ENCODE measurements at regions of chr11 and their contacts with region 1.

Region 1: DNA sequence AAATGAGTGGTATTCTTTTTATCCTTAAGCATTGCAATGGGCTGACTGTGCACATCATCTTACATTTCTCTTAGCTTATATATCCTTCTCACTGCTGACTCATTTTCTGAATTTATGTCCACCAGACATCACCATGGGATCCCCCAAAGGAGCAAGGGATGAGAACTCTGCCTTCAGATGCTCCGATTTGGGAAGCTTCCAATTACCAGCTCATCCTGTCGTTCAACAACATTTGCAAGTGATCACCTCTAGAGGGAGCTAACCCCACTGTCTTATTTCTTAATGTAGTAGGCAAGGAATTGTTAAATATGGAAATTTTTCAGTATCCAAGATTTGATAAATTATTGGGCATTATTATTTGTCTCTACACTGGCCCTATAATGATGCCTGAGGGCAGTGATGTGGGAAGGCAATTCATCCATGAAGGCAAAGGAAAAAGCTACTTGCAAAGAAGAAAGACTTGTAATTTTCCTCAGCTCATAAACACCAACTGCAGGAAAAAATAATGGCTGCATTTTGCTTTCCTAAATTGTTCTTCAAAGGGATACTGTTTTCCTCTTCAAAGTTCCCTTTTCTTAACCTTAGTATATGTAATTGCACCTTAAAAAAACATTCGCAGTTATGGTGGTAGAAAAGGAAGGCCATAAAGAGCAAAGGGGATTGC is 102.4 kb upstream of the FSHB start:
- DNase-seq: no peak
- ATAC-seq: no peak
- H3K4me3 ChIP-seq: no peak overlapping the region
- H3K27ac ChIP-seq: no peak overlapping the region
- H3K4me1 ChIP-seq: no peaks in the 10 kb centered on the region
- H3K27me3 ChIP-seq: no peaks in the 10 kb centered on the region
- CTCF ChIP-seq: peak; percentile 39 to 73 (median 54)
- POLR2A ChIP-seq: no peak

Region 2: DNA sequence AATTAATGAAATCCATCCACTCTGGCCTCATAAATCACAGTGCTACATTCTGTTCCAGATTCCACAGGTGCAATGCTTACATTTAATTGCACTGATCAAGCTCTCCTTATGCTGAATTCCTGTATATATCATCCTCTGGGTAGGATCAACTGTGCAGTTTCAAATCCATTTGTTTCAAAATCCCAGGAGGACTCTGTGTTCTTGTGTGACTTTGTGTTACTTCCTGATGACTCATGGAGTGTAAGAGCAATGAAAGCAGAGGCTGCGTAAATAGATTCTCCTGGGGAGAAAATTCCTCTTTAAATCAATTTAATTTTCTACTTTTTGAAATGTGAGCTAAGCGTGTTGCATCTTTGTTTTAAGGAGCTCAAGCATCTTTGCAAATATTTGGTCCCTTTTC is 1267.5 kb before region 1 on chr11:
- intact Hi-C with region 1: no loop called
- DNase-seq: no peak
- ATAC-seq: no peak
- H3K4me3 ChIP-seq: no peak overlapping the region
- H3K27ac ChIP-seq: no peak overlapping the region
- H3K4me1 ChIP-seq: no peaks in the 10 kb centered on the region
- H3K27me3 ChIP-seq: no peaks in the 10 kb centered on the region
- CTCF ChIP-seq: no peak
- POLR2A ChIP-seq: no peak

Region 3: DNA sequence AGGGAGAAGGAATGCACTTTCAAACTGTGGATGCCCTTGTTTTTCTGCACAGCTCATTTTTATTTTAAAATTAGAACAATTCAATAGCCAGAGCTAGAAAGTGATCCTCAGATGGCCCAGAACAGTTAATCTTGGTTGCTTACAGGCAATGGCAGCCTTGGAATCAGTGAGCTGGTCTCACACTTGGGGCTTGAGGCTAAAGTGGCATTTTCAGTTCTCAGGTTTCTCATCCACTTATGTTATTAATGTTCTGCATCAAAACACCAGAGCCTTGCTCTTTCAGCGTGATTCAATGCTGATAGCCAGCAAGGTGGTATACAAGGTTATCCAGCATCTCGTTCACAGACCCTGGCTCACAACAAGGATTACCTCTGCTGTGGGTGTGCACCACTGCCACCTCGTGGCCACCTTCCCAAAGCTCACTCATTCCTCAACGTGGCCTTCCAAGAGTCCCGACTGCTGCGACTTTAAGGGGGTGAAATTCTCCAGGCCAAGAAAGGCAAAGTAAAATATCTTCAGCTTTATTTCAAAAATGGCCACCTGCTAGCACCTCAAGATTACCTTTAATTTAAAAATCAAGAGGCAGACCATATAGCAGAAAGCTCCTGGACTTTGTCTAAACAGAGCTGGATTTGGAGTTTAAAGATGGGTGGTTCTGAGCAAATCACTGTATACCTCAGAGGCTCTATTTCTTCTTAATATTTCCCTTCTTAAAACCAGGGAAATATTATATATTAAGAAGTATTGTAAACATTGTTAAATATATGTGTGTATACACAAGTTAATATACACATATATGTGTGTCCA is 68.2 kb after region 1 on chr11:
- intact Hi-C with region 1: loop called in 3 of 10 experiments (anchors 2 to 5 kb)
- DNase-seq: peak; percentile 39 to 72 (median 42)
- ATAC-seq: peak in 3 of 4 donors; percentile 64 to 92 (median 85)
- H3K4me3 ChIP-seq: no peak overlapping the region
- H3K27ac ChIP-seq: no peak overlapping the region
- H3K4me1 ChIP-seq: no peaks in the 10 kb centered on the region
- H3K27me3 ChIP-seq: no peaks in the 10 kb centered on the region
- CTCF ChIP-seq: peak; percentile 59 to 81 (median 74)
- POLR2A ChIP-seq: no peak

Region 4: GRCh38 chr11:30314625-30315024 is 186.2 kb after region 1 on chr11:
- intact Hi-C with region 1: loop called in 7 of 10 experiments (anchors 5 to 10 kb)
- DNase-seq: no peak
- ATAC-seq: no peak
- H3K4me3 ChIP-seq: no peak overlapping the region
- H3K27ac ChIP-seq: no peak overlapping the region
- H3K4me1 ChIP-seq: no peaks in the 10 kb centered on the region
- H3K27me3 ChIP-seq: peaks cover 0 to 7% (median 0%) of the 10 kb centered on the region in 9 donors
- CTCF ChIP-seq: peak; percentile 8 to 52 (median 33)
- POLR2A ChIP-seq: no peak

Region 5: DNA sequence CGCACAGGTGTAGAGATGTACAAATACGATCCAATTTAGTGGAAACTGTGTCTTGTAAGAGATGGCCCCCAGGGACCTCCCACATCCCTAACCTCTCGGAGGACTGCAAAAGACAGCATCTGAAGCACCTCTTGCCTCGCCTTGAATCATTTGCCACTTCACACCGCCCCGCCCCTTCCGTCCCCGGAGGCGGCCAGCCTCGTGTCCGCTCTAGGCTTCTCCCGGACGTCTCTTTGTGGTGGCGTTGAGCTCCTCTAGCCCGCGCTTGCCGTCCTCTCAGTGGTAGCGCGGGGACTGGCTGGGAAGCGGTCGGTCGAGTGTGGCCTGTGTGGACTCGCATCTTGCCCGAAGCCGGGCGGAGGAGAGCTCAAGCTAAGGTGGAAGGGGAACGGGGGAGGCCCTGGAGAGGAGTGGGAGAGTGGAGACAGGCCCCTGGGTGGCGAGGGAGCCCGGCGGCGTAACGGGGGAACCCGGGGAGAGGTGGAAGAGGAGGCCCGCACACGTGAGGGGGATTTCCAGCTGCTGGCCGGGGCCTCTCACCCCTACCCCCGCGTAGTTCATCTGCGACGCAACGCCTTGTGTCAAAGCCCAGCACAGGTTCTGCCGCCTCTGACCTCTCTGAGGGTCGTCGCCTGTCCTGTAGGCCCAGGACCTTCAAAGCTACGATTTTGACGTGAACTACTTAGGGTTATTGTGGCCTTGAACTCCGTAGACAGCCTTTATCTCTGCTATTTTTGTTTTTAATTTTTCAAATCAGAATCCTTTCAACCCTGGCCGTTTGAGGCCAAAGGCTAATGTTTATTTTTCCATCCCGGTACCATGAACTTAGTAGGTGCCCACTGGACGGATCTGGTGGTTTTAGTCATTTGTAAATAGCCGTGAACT is 194.7 kb after region 1 on chr11 and contains the start of gene ARL14EP:
- intact Hi-C with region 1: loop called in 9 of 10 experiments (anchors 5 to 10 kb)
- DNase-seq: peak; percentile 93 to 96 (median 94)
- ATAC-seq: peak; percentile 99 to 100 (median 100)
- H3K4me3 ChIP-seq: peak within 1 kb of the TSS; percentile 56 to 88 (median 80)
- H3K27ac ChIP-seq: peak within 1 kb of the TSS; percentile 73 to 94 (median 85)
- H3K4me1 ChIP-seq: peaks cover 0 to 46% (median 34%) of the 10 kb centered on the region in 12 donors
- H3K27me3 ChIP-seq: peaks cover 0 to 8% (median 0%) of the 10 kb centered on the region in 9 donors
- CTCF ChIP-seq: peak in 1 of 12 donors; percentile 21
- POLR2A ChIP-seq: peak in 1 of 2 donors; percentile 82
- total RNA-seq, gene ARL14EP: 23.1 to 43.8 (median 30.5) TPM

Region 6: GRCh38 chr11:30411383-30411782 is 283.0 kb after region 1 on chr11:
- intact Hi-C with region 1: no loop called
- DNase-seq: no peak
- ATAC-seq: no peak
- H3K4me3 ChIP-seq: no peak overlapping the region
- H3K27ac ChIP-seq: no peak overlapping the region
- H3K4me1 ChIP-seq: peaks cover 0 to 16% (median 0%) of the 10 kb centered on the region in 12 donors
- H3K27me3 ChIP-seq: no peaks in the 10 kb centered on the region
- CTCF ChIP-seq: no peak
- POLR2A ChIP-seq: no peak

Measured in heart left ventricle (tissue), 16 donors.